ENCODE measurements at regions of chr9 and their contacts with region 1.

Region 1: DNA sequence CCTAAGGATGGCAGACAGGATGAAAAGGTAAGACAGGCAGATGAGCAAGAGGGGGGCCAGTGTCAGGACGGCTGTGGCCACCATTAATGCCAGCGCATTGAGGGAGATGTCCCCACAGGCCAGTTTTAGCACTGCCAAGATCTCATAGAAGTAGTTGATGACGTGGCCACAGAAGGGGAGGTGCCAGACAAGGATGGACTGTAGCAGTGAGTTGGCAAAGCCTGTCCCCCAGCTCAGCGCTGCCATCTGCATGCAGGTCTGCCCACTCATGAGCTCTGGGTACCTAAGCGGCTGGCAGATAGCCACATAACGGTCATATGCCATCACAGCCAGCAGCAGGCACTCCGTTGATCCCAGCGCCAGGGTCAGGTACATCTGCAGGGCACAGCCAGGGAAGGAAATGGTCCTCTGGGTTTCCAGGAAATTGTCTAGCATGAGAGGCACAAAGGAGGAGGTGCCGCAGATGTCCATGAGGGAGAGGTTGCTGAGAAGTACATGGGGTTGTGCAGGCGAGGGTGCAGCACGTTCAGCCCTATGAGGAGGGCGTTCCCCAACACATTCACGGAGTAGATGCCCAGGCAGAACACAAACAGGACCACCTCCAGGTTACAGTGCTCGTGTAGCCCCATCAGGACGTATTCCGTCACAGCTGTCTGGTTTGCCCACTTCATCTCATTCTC is 10.8 kb downstream of the OR13J1 start:
- DNase-seq: peak; percentile 35
- H3K4me3 Mint-ChIP-seq: no peak overlapping the region
- H3K27ac Mint-ChIP-seq: no peak overlapping the region
- H3K4me1 Mint-ChIP-seq: no peaks in the 10 kb centered on the region
- H3K27me3 Mint-ChIP-seq: peaks cover 9% of the 10 kb centered on the region

Region 2: DNA sequence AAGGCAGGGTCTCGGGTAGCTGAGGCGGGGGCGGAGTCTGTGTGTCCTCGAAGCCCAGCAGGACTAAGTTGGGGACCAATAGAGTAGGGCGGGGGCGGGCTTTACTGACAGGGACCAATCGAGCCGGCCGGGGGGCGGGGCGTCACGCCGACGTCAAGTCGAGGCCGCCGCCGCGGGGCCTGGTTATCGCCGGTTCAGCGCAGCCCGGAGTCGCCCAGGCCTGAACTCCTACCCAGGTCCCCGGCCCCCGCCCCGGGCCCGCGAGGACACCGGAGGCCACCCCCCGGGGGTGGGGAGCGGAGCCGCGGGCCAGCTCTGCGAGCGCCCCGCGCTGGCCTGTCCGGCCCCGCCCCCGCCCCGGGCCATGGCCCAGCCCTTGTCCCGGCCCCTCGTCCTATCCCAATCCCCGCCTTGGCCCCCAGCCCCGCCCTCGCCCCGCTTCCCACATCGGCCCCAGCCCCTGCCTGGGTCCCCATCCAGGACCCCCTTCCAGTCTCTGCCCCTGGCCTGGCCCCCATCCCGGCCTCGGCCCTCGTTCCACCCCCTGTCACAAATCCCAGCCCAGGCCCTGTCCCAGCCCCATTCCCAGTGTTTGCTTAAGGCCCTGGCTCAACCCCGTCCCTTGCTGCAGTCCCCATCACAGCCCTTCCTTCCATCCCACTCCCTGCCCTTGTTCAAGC is 30.2 kb before region 1 on chr9 and contains the start of gene TMEM8B:
- CTCF ChIA-PET with region 1: interaction called, 14 read pairs
- intact Hi-C with region 1: no loop called
- DNase-seq: peak; percentile 96
- H3K4me3 Mint-ChIP-seq: peak within 1 kb of the TSS; percentile 89
- H3K27ac Mint-ChIP-seq: peak within 1 kb of the TSS; percentile 59
- H3K4me1 Mint-ChIP-seq: peaks cover 24% of the 10 kb centered on the region
- H3K27me3 Mint-ChIP-seq: peaks cover 2% of the 10 kb centered on the region
- total RNA-seq, gene TMEM8B: 6.2 to 6.6 TPM